Breast epithelium (tissue), 4 donors: ENCODE measurements at regions of chr3 and their contacts with region 1.

Region 1: DNA sequence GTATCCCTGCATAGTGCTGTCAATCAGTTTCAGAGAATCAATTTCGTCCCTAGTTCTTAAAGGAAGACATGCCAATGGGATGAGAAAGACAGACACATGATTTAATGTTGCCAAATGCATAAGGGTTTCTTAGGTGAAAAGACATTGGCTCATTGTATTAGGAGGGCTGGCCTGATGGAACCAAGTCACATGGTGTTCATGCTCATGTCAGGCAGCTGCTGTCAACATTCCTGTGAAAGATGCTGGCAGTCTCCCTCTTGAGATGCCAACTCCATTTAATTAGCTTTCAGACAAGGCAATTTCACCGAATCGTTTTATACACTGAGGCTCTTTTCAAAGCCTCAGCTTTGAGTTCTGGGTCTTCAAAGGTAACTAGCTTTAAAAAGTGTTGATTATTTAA is 16.1 kb upstream of the IL1RAP start:
- DNase-seq: no peak
- H3K4me3 ChIP-seq: no peak overlapping the region
- H3K27ac ChIP-seq: no peak overlapping the region
- H3K4me1 ChIP-seq: no peaks in the 10 kb centered on the region
- H3K27me3 ChIP-seq: no peaks in the 10 kb centered on the region
- CTCF ChIP-seq: no peak
- POLR2A ChIP-seq: no peak

Region 2: GRCh38 chr3:190183121-190183520 is 314.7 kb before region 1 on chr3:
- intact Hi-C with region 1: loop called (anchors 5 kb)
- DNase-seq: no peak
- H3K4me3 ChIP-seq: no peak overlapping the region
- H3K27ac ChIP-seq: no peak overlapping the region
- H3K4me1 ChIP-seq: no peaks in the 10 kb centered on the region
- H3K27me3 ChIP-seq: no peaks in the 10 kb centered on the region
- CTCF ChIP-seq: no peak
- POLR2A ChIP-seq: no peak

Region 3: GRCh38 chr3:191721990-191722389 is 1224.2 kb after region 1 on chr3:
- intact Hi-C with region 1: no loop called
- DNase-seq: no peak
- H3K4me3 ChIP-seq: no peak overlapping the region
- H3K27ac ChIP-seq: no peak overlapping the region
- H3K4me1 ChIP-seq: no peaks in the 10 kb centered on the region
- H3K27me3 ChIP-seq: no peaks in the 10 kb centered on the region
- CTCF ChIP-seq: no peak
- POLR2A ChIP-seq: no peak